AG04449 (cell line): ENCODE measurements at regions of chr1 and their contacts with region 1.

Region 1: DNA sequence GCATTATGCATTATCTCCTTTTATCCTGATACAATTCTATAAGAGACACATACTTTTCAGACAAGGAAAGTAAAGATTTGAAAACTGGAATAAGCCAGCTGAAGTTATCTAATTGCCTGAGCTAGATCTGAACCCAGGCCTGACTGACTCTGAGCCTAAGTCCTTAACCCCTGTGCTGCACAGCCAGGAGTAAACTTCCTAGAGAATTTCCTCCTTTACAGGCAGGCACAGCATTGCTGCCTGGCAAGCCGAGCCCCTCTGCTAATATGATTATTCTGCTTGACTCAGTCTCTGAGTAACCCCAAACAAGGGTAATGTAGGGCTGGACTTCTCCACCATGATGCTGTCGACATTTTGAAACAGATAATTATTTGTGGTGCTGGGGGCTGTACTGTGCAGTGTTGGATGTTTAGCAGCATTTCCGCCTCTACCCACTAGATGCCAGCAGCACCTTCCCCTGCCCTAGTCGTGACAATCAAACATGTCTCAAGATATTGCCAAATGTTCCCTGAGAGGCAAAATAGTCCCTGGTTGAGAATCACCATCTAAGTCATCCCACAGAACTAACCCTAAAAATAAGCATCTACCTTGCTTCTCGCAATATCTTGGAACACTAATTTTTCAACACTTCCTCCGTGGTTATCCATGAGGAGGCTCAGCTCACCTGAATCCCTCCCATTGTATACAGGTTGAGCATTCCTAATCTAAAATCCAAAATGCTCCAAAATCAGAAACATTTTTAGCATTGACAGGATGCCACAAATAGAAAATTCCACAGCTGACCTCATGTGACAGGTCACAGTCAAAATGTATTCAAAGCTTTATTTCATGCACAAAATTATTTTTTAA is 18.5 kb downstream of the CAMK1G start:
- DNase-seq: no peak
- H3K4me3 ChIP-seq: no peak overlapping the region
- CTCF ChIP-seq: peak; percentile 77

Region 2: DNA sequence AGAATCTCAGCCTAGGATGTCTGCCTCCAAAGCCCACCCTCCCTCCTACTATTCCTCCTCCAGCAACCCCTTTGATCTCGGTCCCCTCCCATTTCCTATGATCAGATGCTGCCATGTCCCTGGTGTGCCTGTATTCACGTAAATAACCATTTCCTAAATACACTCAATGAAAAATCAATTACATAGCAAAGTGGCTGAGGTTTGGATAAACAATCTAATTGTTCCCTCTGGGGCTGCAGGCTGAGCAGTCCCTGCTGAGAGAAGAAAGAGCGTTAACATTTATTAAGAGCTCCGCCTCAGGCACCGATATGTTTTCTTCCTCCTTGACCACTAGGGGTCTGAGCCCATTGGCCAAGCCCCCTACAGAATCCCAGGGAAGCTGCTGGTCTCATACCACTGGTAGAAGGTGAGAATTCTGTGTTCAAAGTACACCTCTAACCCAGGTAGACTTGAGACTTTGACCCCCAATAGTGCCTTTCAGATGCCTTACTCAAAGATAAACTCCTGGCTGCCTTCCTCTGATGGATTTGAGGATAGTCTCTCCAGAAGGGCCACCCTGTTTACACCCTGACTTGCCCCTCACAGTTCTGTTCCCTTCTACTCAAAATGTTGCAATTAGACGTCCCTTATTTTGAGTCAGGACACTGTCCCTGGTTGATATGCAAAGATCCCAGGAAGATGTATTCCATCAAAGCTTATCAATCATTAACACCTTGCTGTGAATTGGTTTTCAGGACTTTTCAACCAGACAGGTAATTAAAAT is 52.4 kb before region 1 on chr1:
- CTCF ChIA-PET with region 1: no interaction called
- POLR2A ChIA-PET with region 1: no interaction called
- DNase-seq: no peak
- H3K4me3 ChIP-seq: no peak overlapping the region
- CTCF ChIP-seq: no peak

Region 3: GRCh38 chr1:209576798-209577197 is 25.2 kb before region 1 on chr1:
- CTCF ChIA-PET with region 1: interaction called, 17 read pairs
- POLR2A ChIA-PET with region 1: no interaction called
- DNase-seq: no peak
- H3K4me3 ChIP-seq: no peak overlapping the region
- CTCF ChIP-seq: peak; percentile 96

Region 4: GRCh38 chr1:209585672-209586071 is 16.4 kb before region 1 on chr1:
- CTCF ChIA-PET with region 1: interaction called, 38 read pairs
- POLR2A ChIA-PET with region 1: no interaction called
- DNase-seq: no peak
- H3K4me3 ChIP-seq: peak overlapping the region; percentile 33
- CTCF ChIP-seq: no peak

Region 5: DNA sequence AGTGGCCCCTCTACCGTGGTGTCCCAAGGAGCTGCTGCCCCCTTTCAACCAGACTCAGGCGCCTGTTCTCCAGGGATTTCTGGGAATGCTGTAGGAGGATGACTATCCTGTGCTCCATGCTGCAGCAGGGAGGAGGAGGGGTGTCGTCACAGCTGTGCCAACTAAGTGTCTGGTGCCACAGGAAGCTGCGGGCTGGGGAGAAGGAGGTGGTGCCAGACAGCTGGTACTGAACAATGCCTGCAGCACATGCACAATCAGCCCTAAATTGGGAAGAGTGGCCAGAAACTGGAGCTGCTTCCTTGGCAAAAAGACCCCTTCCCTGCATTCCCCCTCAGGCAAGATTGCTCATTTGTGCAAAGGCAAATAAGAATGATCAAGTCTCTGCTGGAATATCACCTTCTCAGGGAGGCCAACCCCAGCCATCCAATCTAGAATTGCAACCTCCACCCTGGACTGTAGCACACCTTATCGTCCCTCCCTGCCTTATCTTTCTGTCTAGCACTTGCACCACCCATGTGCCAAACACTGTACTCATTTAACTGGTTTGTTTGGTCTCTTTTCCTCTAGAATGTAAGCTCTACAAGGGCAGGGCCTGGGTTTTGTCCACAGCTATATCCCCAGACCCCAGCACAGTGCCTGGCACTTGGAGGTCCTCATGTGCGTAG is 16.9 kb after region 1 on chr1:
- CTCF ChIA-PET with region 1: interaction called, 274 read pairs
- POLR2A ChIA-PET with region 1: no interaction called
- DNase-seq: no peak
- H3K4me3 ChIP-seq: no peak overlapping the region
- CTCF ChIP-seq: no peak